ENCODE measurements at regions of chr1 and their contacts with region 1.

Region 1: DNA sequence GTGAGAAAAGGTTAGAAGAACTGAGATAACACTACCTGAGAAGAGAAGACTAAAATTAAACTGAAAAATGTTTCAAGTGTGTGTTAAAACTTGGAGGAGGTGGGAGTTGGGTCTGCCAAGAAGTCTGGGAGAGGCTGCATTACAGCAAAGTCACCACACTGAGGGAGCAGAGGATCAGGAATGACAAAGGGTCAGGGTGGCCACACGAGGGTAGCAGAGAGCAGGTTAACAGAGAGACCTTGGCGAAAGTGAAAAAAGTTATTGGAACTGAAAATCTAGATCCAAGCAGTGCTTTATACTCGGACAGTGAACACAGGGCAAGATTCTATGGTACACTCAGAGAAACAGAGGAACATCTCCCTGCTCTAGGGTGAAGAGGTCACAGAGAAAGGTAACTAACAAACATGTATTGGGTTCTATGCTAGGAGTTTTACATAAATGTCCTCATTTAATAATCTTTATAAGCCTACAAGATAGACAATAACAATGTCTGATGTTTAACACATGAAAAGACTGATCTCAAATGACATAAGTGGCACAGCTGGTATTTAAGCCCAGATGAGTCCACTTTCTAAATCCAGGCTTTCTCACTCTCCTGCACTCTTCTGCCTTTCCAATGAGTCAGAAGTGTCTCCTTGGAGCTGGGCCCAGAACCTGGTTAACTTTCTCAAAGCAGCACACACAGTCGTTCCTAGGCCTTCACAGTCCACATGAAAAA is 10.3 kb upstream of the CADM3 start:
- DNase-seq: peak; percentile 70 to 90
- H3K4me3 ChIP-seq: no peak overlapping the region
- CTCF ChIP-seq: peak in 1 of 3 donors; percentile 98
- POLR2A ChIP-seq: no peak

Region 2: DNA sequence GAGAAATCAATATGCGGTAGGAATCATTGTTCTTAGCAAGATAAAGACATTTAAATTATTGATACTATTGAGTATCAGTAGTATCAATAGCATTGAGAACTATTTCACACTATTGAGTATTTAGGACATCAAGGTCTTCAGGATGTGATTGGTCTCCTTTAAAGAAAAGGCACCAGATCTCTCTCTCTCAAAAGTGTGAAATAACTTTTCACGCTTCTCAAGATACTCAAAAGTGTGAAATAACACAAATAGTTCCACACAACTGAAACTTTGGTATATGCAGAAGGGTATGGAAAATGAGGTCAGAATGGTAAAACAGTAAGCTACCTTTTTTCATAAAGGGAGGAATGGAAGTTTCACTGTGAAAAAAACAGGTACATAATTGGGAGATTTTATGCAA is 236.5 kb before region 1 on chr1:
- intact Hi-C with region 1: no loop called
- DNase-seq: no peak
- H3K4me3 ChIP-seq: no peak overlapping the region
- CTCF ChIP-seq: no peak
- POLR2A ChIP-seq: no peak

Region 3: GRCh38 chr1:159204161-159205141 is 43.3 kb after region 1 on chr1 and contains the start of gene ACKR1:
- intact Hi-C with region 1: loop called (anchors 5 kb)
- DNase-seq: no peak
- H3K4me3 ChIP-seq: no peak within 1 kb of the TSS
- CTCF ChIP-seq: no peak
- POLR2A ChIP-seq: no peak
- total RNA-seq, gene ACKR1: 17.4 to 104 (median 46.9) TPM

Region 4: DNA sequence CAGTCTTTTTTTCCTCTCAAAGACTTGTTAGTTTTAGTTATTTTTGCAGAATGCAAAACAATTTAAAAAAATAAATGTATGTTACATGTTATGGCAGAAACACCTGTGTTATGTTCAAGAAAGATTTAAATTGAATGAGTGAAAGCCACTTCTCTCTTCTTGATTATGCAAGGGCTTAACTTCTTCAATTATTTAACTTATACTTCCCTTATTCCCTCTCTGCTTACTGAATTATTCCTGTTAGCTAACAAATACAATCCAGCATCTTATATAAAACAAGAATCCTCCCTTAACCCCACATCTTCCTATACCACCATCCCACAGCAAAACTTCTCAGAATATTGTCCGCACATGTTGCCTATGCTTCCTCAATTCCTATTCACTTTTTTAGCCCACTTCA is 130.3 kb after region 1 on chr1:
- intact Hi-C with region 1: no loop called
- DNase-seq: no peak
- H3K4me3 ChIP-seq: no peak overlapping the region
- CTCF ChIP-seq: no peak
- POLR2A ChIP-seq: no peak

Measured in lower leg skin (tissue), 4 donors.